Motor neuron (in vitro differentiated cells): ENCODE measurements at regions of chr15 and their contacts with region 1.

Region 1: GRCh38 chr15:92797168-92797951 is 102.8 kb upstream of the CHD2 start:
- ATAC-seq: peak; percentile 20 to 86 (median 74)
- H3K4me3 ChIP-seq: no peak overlapping the region
- H3K27ac ChIP-seq: no peak overlapping the region
- H3K4me1 ChIP-seq: no peaks in the 10 kb centered on the region

Region 2: DNA sequence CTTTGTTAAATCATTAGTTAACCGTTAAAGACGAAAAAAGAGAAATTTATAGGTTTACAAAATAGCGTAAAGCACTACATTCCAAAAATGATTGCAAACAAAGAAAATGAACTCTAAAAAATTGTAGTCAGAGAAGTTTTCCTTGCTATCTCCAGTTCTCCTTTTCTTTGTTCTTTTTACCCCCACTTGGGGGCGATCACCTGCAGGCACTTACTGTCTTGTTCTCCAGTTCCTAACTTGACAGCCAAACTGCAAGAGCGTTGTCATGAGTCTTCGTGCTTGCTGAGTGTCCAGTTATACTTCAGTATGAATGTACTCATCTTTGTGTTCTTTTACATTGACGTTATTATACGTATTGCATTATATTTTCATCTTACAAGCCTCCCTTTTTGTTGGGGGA is 157.2 kb after region 1 on chr15:
- in situ Hi-C with region 1: loop called in 1 of 9 experiments (anchors 25 kb)
- ATAC-seq: peak in 1 of 8 experiments; percentile 23
- H3K4me3 ChIP-seq: no peak overlapping the region
- H3K27ac ChIP-seq: no peak overlapping the region
- H3K4me1 ChIP-seq: no peaks in the 10 kb centered on the region

Region 3: DNA sequence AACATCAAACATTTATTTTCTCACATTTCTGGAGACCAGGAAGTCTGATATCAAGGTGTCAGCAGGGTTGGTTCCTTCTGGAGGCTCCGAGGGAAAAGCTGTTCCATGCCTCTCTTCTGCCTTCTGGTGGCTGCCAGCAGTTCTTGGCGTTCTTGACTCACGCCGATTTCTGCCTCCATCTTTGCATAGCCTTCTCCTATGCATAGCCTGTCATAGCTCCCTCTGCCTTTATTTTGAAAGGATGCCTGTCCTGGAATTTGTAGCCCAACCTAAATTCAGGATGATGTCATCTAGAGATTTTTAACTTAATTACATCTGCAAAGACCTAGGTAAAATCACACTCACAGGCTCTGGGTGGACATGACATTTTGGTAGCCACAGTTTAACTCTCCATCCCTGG is 221.2 kb after region 1 on chr15:
- in situ Hi-C with region 1: loop called in 1 of 9 experiments (anchors 25 kb)
- ATAC-seq: peak in 3 of 8 experiments; percentile 31 to 37 (median 36)
- H3K4me3 ChIP-seq: no peak overlapping the region
- H3K27ac ChIP-seq: no peak overlapping the region
- H3K4me1 ChIP-seq: no peaks in the 10 kb centered on the region